AG04450 (cell line): ENCODE measurements at regions of chr11 and their contacts with region 1.

Region 1: GRCh38 chr11:131910523-131911387 is 540.3 kb downstream of the NTM start:
- DNase-seq: no peak
- H3K4me3 ChIP-seq: peak overlapping the region; percentile 88
- H3K27ac ChIP-seq: peak overlapping the region; percentile 25
- H3K27me3 ChIP-seq: no peaks in the 10 kb centered on the region
- CTCF ChIP-seq: no peak; the same call in 1 of the 2 replicates

Region 2: DNA sequence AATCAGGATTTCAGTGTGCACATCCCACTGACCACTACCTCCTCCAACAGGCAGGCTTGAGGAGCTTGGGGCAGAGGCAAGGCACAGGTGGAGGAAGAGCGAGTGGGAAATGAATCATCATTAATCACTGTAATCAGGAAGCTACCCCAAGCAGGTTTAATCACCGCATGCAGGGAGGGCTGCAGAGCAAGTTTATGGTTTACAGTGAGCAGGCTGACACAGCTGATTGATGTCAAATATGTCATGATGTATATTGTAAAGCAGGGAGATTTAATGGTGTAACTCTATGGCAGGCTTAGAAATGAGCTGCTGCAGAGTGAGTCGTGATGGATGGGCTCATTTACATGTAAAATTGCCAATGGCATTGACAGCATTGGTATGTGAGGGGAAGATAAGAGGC is 99.4 kb before region 1 on chr11:
- CTCF ChIA-PET with region 1: no interaction called
- POLR2A ChIA-PET with region 1: no interaction called
- DNase-seq: no peak
- H3K4me3 ChIP-seq: no peak overlapping the region
- H3K27ac ChIP-seq: no peak overlapping the region
- H3K27me3 ChIP-seq: peaks cover 20% of the 10 kb centered on the region
- CTCF ChIP-seq: no peak

Region 3: GRCh38 chr11:132062541-132062940 is 151.8 kb after region 1 on chr11:
- CTCF ChIA-PET with region 1: interaction called, 13 read pairs
- POLR2A ChIA-PET with region 1: no interaction called
- DNase-seq: no peak
- H3K4me3 ChIP-seq: no peak overlapping the region
- H3K27ac ChIP-seq: no peak overlapping the region
- H3K27me3 ChIP-seq: no peaks in the 10 kb centered on the region
- CTCF ChIP-seq: no peak

Region 4: DNA sequence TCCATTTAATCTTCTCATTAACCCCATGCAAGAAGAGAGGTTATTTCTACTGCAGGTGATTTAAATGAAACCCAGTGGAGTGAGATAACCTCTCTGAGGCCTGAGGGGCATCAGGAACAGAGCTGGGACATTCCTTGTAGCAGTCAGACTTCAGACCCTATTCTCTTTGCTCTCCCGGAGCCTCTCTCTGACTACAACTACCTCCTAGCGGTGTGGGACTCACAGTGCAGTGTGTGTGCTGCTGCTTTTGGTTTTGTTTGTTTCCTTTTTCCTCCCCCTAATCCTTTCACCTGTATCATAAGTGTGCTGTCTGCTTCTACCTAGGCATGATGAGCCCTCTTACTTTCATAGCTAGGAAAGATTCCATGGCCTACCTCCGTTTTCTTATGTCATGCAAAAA is 229.3 kb after region 1 on chr11:
- CTCF ChIA-PET with region 1: no interaction called
- POLR2A ChIA-PET with region 1: no interaction called
- DNase-seq: no peak
- H3K4me3 ChIP-seq: no peak overlapping the region
- H3K27ac ChIP-seq: no peak overlapping the region
- H3K27me3 ChIP-seq: no peaks in the 10 kb centered on the region
- CTCF ChIP-seq: no peak